Activated naive CD4-positive, alpha-beta T cell treated with anti-CD3 and anti-CD28 coated beads for 36 hours (primary cell): ENCODE measurements at regions of chr6 and their contacts with region 1.

Region 1: GRCh38 chr6:138987640-138988468 is at the start of gene REPS1:
- DNase-seq: peak; percentile 92
- H3K4me3 Mint-ChIP-seq: peak within 1 kb of the TSS; percentile 86
- H3K27ac Mint-ChIP-seq: peak within 1 kb of the TSS; percentile 89
- H3K4me1 Mint-ChIP-seq: peaks cover 4% of the 10 kb centered on the region
- H3K27me3 Mint-ChIP-seq: no peaks in the 10 kb centered on the region
- total RNA-seq, gene REPS1: 25.8 to 28.8 TPM

Region 2: GRCh38 chr6:138115877-138116660 is 871.8 kb before region 1 on chr6:
- CTCF ChIA-PET with region 1: no interaction called
- intact Hi-C with region 1: loop called (anchors 10 kb)
- DNase-seq: peak; percentile 60
- H3K4me3 Mint-ChIP-seq: no peak overlapping the region
- H3K27ac Mint-ChIP-seq: no peak overlapping the region
- H3K4me1 Mint-ChIP-seq: peaks cover 6% of the 10 kb centered on the region
- H3K27me3 Mint-ChIP-seq: peaks cover 12% of the 10 kb centered on the region

Region 3: DNA sequence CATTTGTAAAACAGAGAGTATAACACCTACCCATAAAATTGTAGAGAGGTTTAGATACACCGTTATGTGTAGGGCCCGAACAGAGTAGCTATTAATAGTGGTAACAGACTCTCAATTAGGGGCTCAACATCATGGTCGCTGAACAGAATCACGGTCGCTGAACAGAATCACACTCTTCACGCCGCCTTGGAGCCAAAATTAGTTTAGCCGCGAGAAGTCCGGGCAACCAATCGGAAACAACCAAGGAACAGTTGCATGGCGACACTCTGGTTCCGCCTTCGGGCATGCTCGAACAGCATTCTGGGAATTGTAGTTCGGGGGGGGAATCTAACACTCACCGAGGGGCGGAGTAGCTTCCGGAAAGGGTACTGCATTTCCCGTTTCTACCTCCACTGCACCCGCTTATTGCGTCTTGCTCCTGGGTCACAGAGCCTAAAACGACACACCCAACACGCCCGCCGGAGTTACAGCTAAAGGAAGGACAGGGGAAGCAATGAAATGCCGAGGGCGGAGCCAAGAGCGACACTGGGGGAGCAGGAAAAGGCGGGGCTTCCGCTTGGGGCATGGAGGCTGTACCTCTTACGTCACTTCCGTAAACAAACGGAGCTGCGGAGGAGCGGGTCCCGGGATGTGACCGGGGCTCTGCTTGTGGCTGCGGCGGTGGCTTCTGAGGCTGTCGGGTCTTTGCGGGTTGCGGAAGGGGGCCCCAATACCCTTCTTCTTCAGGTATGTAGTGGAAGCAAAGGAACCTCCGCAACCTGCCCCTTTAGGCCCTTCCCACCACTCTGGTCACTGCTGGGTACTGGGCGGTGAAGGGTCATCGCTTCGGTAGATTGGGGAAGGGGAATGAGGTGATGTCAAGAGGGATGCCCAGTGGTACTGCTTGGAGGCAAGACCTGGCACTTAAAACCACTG is 214.4 kb before region 1 on chr6 and contains the start of gene CCDC28A:
- CTCF ChIA-PET with region 1: interaction called, 3 read pairs
- intact Hi-C with region 1: loop called (anchors 1 kb)
- DNase-seq: peak; percentile 97
- H3K4me3 Mint-ChIP-seq: peak within 1 kb of the TSS; percentile 98
- H3K27ac Mint-ChIP-seq: peak within 1 kb of the TSS; percentile 100
- H3K4me1 Mint-ChIP-seq: peaks cover 30% of the 10 kb centered on the region
- H3K27me3 Mint-ChIP-seq: no peaks in the 10 kb centered on the region
- total RNA-seq, gene CCDC28A: 18.9 to 19.2 TPM

Region 4: GRCh38 chr6:138869398-138869797 is 118.5 kb before region 1 on chr6:
- CTCF ChIA-PET with region 1: no interaction called
- intact Hi-C with region 1: loop called (anchors 5 kb)
- DNase-seq: no peak
- H3K4me3 Mint-ChIP-seq: no peak overlapping the region
- H3K27ac Mint-ChIP-seq: no peak overlapping the region
- H3K4me1 Mint-ChIP-seq: peaks cover 14% of the 10 kb centered on the region
- H3K27me3 Mint-ChIP-seq: peaks cover 2% of the 10 kb centered on the region

Region 5: GRCh38 chr6:138970856-138971425 is 16.9 kb before region 1 on chr6:
- CTCF ChIA-PET with region 1: interaction called, 8 read pairs
- intact Hi-C with region 1: loop called (anchors 1 kb)
- DNase-seq: peak; percentile 57
- H3K4me3 Mint-ChIP-seq: no peak overlapping the region
- H3K27ac Mint-ChIP-seq: no peak overlapping the region
- H3K4me1 Mint-ChIP-seq: peaks cover 69% of the 10 kb centered on the region
- H3K27me3 Mint-ChIP-seq: no peaks in the 10 kb centered on the region

Region 6: GRCh38 chr6:139109558-139109957 is 121.7 kb after region 1 on chr6:
- CTCF ChIA-PET with region 1: no interaction called
- intact Hi-C with region 1: loop called (anchors 2 kb)
- DNase-seq: peak; percentile 71
- H3K4me3 Mint-ChIP-seq: no peak overlapping the region
- H3K27ac Mint-ChIP-seq: no peak overlapping the region
- H3K4me1 Mint-ChIP-seq: peaks cover 48% of the 10 kb centered on the region
- H3K27me3 Mint-ChIP-seq: no peaks in the 10 kb centered on the region

Region 7: DNA sequence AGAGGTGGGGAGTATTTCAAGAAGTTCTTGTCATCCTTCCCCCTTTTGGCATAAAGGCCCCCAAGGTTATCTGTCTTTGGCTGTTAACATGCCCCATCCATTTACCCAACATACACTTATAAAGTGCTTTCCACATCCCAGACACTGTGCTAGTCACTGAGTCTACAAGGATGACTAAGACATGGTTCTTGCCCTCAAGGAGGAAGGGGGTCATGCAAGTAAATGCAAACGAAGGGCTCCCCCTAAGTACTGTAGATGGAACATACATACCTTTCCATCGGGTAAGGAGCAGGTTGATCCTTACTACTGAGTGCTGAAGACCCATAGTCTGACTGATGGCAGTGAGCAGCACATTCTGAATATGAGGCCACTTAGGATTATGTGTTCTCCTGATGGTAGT is 185.3 kb after region 1 on chr6:
- CTCF ChIA-PET with region 1: no interaction called
- intact Hi-C with region 1: loop called (anchors 10 kb)
- DNase-seq: peak; percentile 46
- H3K4me3 Mint-ChIP-seq: no peak overlapping the region
- H3K27ac Mint-ChIP-seq: peak overlapping the region; percentile 85
- H3K4me1 Mint-ChIP-seq: peaks cover 88% of the 10 kb centered on the region
- H3K27me3 Mint-ChIP-seq: no peaks in the 10 kb centered on the region